Heart left ventricle (tissue), 16 donors: ENCODE measurements at regions of chr14 and their contacts with region 1.

Region 1: DNA sequence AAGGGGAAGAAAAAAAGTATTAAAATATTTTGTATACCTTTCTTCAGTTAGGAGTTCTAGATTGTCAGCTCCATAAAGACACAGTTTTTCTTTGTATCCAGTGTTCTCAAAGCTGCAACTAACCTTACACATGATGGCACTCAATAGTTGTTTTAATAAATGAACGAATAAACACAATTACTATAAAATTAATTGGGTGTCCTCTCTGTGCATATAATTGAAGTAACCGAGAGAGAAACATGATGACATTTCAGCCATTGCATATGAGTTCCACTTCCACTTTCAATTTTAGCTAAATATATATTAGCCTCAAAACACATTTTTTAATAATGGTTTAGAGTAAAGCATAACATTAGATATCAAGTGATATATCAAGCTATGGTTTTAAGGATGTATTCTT is 671.2 kb downstream of the LRFN5 start:
- DNase-seq: no peak
- ATAC-seq: no peak
- H3K4me3 ChIP-seq: no peak overlapping the region
- H3K27ac ChIP-seq: no peak overlapping the region
- H3K4me1 ChIP-seq: no peaks in the 10 kb centered on the region
- H3K27me3 ChIP-seq: no peaks in the 10 kb centered on the region
- CTCF ChIP-seq: no peak
- POLR2A ChIP-seq: no peak

Region 2: DNA sequence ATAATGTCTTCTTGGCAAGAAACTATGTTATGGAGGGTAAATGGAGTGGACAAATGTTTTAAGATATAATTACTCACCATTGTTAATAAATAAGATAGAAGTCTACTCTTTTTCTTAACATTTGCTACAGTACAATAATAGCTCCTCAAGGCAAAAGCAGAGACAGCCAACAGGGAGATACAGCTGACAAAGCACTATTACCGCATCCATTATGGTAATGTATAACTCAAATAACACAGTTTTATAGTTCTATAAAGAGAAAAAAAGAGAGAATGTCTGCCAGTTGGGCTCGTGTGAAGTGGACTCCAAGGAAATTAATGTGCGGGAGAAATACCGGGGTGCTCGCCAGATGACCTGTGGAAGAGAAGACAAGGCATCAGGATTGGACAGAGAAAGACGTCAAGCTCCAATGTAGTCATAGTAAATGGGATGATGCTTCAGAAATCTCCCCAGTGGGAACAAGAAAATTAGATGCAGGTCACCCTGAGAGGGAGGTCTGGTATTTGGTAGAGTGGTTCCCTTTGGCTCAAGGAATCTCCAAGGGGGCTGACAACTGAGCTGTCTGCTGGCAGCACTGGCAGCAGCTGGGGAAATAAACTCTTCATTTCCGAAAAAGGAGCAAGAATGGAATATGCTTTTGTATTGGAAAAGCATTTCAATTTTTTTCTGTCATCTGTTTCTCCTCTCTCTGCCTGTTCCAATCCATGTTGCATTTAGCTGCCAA is 327.2 kb before region 1 on chr14:
- intact Hi-C with region 1: no loop called
- DNase-seq: no peak
- ATAC-seq: no peak
- H3K4me3 ChIP-seq: no peak overlapping the region
- H3K27ac ChIP-seq: no peak overlapping the region
- H3K4me1 ChIP-seq: no peaks in the 10 kb centered on the region
- H3K27me3 ChIP-seq: no peaks in the 10 kb centered on the region
- CTCF ChIP-seq: no peak
- POLR2A ChIP-seq: no peak

Region 3: DNA sequence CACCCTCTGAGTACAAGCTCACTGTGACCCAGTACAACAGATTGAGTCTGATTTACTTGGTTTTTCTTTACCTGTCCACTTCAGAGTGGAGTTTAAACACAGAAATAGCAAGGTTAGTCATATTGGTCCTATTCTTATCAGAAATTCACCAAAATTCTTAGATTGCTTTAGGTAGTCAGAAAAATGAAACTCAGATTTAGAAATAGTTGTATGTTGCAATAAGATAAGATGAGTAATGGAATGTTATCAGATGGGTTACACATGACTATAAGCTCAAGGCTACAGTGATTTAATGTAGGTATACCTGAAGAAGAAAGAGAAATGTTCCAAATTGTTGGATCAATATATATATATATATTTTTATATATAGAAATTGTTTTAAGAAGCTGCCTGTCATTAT is 147.0 kb before region 1 on chr14:
- intact Hi-C with region 1: no loop called
- DNase-seq: no peak
- ATAC-seq: no peak
- H3K4me3 ChIP-seq: no peak overlapping the region
- H3K27ac ChIP-seq: no peak overlapping the region
- H3K4me1 ChIP-seq: no peaks in the 10 kb centered on the region
- H3K27me3 ChIP-seq: no peaks in the 10 kb centered on the region
- CTCF ChIP-seq: no peak
- POLR2A ChIP-seq: no peak

Region 4: DNA sequence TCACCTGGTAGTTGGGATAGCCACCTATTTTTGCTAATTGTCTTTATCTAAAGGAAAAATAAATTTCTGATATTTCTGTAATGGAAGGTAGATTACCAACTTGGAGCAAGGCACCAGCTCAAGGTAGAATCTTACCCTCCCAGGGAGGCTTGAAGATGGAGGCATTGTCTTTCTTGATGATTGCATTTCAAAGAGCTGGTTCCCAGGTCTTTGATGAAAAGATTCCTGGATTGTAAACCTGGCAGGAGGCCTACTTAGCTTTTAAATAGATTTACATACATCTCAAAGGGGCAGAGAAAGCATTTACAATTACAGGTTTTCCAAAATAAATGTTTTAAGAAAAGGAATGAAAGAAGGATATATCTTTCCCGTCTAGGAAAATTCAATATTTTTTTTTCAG is 58.1 kb after region 1 on chr14:
- intact Hi-C with region 1: loop called in 1 of 10 experiments (anchors 10 kb)
- DNase-seq: no peak
- ATAC-seq: no peak
- H3K4me3 ChIP-seq: no peak overlapping the region
- H3K27ac ChIP-seq: no peak overlapping the region
- H3K4me1 ChIP-seq: no peaks in the 10 kb centered on the region
- H3K27me3 ChIP-seq: no peaks in the 10 kb centered on the region
- CTCF ChIP-seq: no peak
- POLR2A ChIP-seq: no peak

Region 5: GRCh38 chr14:42504442-42504841 is 226.6 kb after region 1 on chr14:
- intact Hi-C with region 1: no loop called
- DNase-seq: no peak
- ATAC-seq: no peak
- H3K4me3 ChIP-seq: no peak overlapping the region
- H3K27ac ChIP-seq: no peak overlapping the region
- H3K4me1 ChIP-seq: no peaks in the 10 kb centered on the region
- H3K27me3 ChIP-seq: no peaks in the 10 kb centered on the region
- CTCF ChIP-seq: no peak
- POLR2A ChIP-seq: no peak

Region 6: DNA sequence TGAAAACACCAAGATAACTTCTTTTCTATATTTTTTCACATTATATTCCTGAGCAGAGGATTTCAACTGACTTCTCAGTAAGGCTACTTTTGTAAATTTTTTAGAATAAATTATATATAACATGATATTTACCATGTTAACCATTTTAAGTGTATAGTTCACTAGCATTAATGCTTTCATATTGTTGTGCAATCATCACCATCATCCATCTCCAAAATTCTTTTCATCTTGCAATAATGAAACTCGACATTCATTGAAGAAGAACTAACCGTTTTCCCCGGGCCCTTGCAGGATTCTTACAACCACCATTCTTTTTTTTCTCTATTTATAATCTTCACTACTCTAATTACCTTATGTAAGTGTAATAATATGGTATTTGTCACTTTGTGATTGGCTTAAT is 364.9 kb after region 1 on chr14:
- intact Hi-C with region 1: no loop called
- DNase-seq: no peak
- ATAC-seq: no peak
- H3K4me3 ChIP-seq: no peak overlapping the region
- H3K27ac ChIP-seq: no peak overlapping the region
- H3K4me1 ChIP-seq: no peaks in the 10 kb centered on the region
- H3K27me3 ChIP-seq: no peaks in the 10 kb centered on the region
- CTCF ChIP-seq: no peak
- POLR2A ChIP-seq: no peak